ENCODE measurements at regions of chr16 and their contacts with region 1.

Region 1: GRCh38 chr16:14310519-14310991 is 239.4 kb downstream of the MRTFB start:
- DNase-seq: peak; percentile 48 to 67
- ATAC-seq: peak; percentile 24 to 45 (median 44)
- H3K4me3 ChIP-seq: peak overlapping the region; percentile 97
- H3K27ac ChIP-seq: peak overlapping the region; percentile 97
- H3K4me1 ChIP-seq: peaks cover 61% of the 10 kb centered on the region
- H3K27me3 ChIP-seq: no peaks in the 10 kb centered on the region
- CTCF ChIP-seq: no peak

Region 2: DNA sequence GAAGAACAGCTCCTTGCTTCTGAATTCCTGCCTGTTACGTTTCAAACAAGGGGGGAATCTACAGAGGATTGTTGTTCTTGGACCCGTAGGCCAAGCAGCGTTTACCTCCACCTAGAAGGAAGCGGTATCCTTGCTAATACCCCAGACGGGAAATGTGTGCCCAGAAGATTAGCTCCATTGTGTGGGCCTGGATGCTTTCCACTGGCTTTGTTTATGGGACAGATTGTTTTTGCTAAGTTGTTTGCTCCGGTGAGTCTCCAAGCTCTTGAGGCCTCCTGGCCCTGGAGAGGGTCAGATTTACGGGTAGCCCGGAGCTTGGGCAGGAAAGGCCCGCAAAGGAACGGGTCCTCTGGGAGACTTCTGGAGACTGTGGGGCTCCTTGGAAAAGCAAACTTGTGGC is 267.8 kb before region 1 on chr16:
- intact Hi-C with region 1: no loop called
- DNase-seq: no peak
- ATAC-seq: peak in 3 of 4 donors; percentile 26 to 30 (median 29)
- H3K4me3 ChIP-seq: no peak overlapping the region
- H3K27ac ChIP-seq: peak overlapping the region; percentile 9
- H3K4me1 ChIP-seq: no peaks in the 10 kb centered on the region
- H3K27me3 ChIP-seq: no peaks in the 10 kb centered on the region
- CTCF ChIP-seq: no peak

Region 3: DNA sequence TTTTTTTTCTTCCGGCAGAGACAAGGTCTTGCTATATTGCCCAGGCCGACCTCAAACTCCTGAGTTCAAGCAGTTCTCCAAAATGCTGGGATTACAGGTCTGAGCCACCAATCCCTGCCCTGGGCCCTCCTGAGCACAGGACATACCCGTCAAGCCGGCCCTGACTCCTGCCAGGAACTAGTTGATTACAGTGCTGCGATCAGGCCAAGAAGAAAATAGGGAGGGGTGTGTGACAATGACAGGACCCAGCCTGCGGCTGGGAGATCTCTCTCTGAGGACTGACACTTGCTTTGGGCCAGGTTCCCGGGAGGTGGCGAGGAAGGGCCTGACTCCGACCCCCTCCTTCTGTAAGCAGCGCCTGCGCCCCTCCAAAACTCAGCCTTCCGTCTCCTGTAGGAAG is 37.2 kb after region 1 on chr16:
- intact Hi-C with region 1: loop called in 1 of 2 experiments (anchors 5 kb)
- DNase-seq: no peak
- ATAC-seq: peak; percentile 66 to 75 (median 69)
- H3K4me3 ChIP-seq: no peak overlapping the region
- H3K27ac ChIP-seq: peak overlapping the region; percentile 73
- H3K4me1 ChIP-seq: peaks cover 16% of the 10 kb centered on the region
- H3K27me3 ChIP-seq: no peaks in the 10 kb centered on the region
- CTCF ChIP-seq: no peak

Region 4: DNA sequence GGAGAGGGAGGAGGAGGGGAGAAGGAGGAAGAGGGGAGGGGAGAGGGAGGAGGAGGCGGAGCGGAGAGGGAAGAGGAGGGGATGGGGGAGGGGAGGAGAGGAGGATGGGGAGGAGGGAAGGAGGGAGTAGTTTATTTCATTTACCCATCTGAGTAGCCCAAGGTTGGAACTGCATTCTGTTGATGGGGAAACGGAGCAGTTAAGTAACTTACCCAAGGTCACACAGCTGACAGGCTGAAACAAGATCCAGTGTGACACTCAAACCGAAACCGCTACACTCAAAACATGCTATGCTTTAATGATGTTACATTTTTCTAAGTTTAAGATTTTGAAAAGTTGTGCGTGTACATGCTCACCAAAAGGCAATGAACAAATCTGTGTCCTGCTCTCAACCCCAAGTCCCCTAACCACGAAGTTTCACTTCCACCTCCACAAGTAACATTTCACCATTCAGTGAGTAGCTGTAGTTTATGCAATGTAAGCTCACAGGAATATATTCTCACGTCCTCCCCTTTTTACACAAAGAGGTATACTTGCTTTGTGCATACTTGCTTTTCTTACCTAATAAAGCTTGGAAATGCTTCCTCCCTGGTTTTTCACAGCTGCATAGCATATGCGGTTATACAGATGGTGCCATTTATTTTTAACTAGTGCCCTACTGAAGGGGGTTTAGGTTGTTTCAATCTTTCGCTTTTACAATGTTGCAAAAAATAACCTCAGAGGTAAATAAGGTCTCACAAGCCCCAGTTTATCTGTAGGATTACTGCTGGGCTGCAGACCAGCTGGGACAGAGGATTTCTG is 44.2 kb after region 1 on chr16:
- intact Hi-C with region 1: loop called (anchors 5 kb)
- DNase-seq: no peak
- ATAC-seq: peak; percentile 23 to 60 (median 50)
- H3K4me3 ChIP-seq: peak overlapping the region; percentile 51
- H3K27ac ChIP-seq: peak overlapping the region; percentile 81
- H3K4me1 ChIP-seq: peaks cover 21% of the 10 kb centered on the region
- H3K27me3 ChIP-seq: no peaks in the 10 kb centered on the region
- CTCF ChIP-seq: no peak

Region 5: GRCh38 chr16:14399378-14400284 is 89.1 kb after region 1 on chr16:
- intact Hi-C with region 1: loop called in 1 of 2 experiments (anchors 5 kb)
- DNase-seq: peak; percentile 79 to 82
- ATAC-seq: peak; percentile 81 to 93 (median 90)
- H3K4me3 ChIP-seq: peak overlapping the region; percentile 49
- H3K27ac ChIP-seq: peak overlapping the region; percentile 95
- H3K4me1 ChIP-seq: peaks cover 10% of the 10 kb centered on the region
- H3K27me3 ChIP-seq: no peaks in the 10 kb centered on the region
- CTCF ChIP-seq: no peak

Region 6: GRCh38 chr16:14436401-14436955 is 125.9 kb after region 1 on chr16:
- intact Hi-C with region 1: loop called in 1 of 2 experiments (anchors 5 kb)
- DNase-seq: peak; percentile 43 to 83
- ATAC-seq: peak; percentile 95 to 98 (median 96)
- H3K4me3 ChIP-seq: peak overlapping the region; percentile 40
- H3K27ac ChIP-seq: peak overlapping the region; percentile 83
- H3K4me1 ChIP-seq: peaks cover 20% of the 10 kb centered on the region
- H3K27me3 ChIP-seq: no peaks in the 10 kb centered on the region
- CTCF ChIP-seq: no peak